CD14-positive monocyte (primary cell): ENCODE measurements at regions of chr1 and their contacts with region 1.

Region 1: GRCh38 chr1:204363335-204364124 is 3.8 kb upstream of the PLEKHA6 start:
- DNase-seq: peak; percentile 56 to 74 (median 69)
- H3K4me3 ChIP-seq: peak overlapping the region; percentile 20 to 78 (median 52)
- H3K4me3 Mint-ChIP-seq: peak overlapping the region; percentile 80 to 92
- H3K27ac ChIP-seq: no peak overlapping the region
- H3K27ac Mint-ChIP-seq: peak overlapping the region in 3 of 7 donors; percentile 6 to 52 (median 48)
- H3K4me1 ChIP-seq: peaks cover 7 to 12% of the 10 kb centered on the region in 2 donors
- H3K4me1 Mint-ChIP-seq: peaks cover 10% of the 10 kb centered on the region
- H3K27me3 ChIP-seq: peaks cover 5 to 22% of the 10 kb centered on the region in 2 donors
- H3K27me3 Mint-ChIP-seq: peaks cover 26 to 39% (median 34%) of the 10 kb centered on the region in 3 donors
- CTCF ChIP-seq: peak; percentile 95

Region 2: GRCh38 chr1:204162231-204163074 is 201.1 kb before region 1 on chr1:
- intact Hi-C with region 1: loop called (anchors 1 to 5 kb)
- DNase-seq: peak; percentile 49 to 66 (median 63)
- H3K4me3 ChIP-seq: no peak overlapping the region
- H3K4me3 Mint-ChIP-seq: no peak overlapping the region
- H3K27ac ChIP-seq: no peak overlapping the region
- H3K27ac Mint-ChIP-seq: no peak overlapping the region
- H3K4me1 ChIP-seq: no peaks in the 10 kb centered on the region
- H3K4me1 Mint-ChIP-seq: peaks cover 3% of the 10 kb centered on the region
- H3K27me3 ChIP-seq: no peaks in the 10 kb centered on the region
- H3K27me3 Mint-ChIP-seq: peaks cover 3 to 13% (median 7%) of the 10 kb centered on the region in 3 donors
- CTCF ChIP-seq: peak; percentile 99

Region 3: GRCh38 chr1:204213668-204214662 is 149.6 kb before region 1 on chr1 and contains the start of gene GOLT1A:
- intact Hi-C with region 1: loop called (anchors 1 to 5 kb)
- DNase-seq: peak; percentile 27 to 46 (median 42)
- H3K4me3 ChIP-seq: peak within 1 kb of the TSS in 1 of 3 experiments; percentile 60
- H3K4me3 Mint-ChIP-seq: peak within 1 kb of the TSS; percentile 42 to 86
- H3K27ac ChIP-seq: no peak within 1 kb of the TSS
- H3K27ac Mint-ChIP-seq: peak within 1 kb of the TSS in 1 of 7 donors; percentile 5
- H3K4me1 ChIP-seq: peaks cover 7 to 8% of the 10 kb centered on the region in 2 donors
- H3K4me1 Mint-ChIP-seq: peaks cover 8% of the 10 kb centered on the region
- H3K27me3 ChIP-seq: peaks cover 0 to 5% of the 10 kb centered on the region in 2 donors
- H3K27me3 Mint-ChIP-seq: peaks cover 6 to 8% (median 7%) of the 10 kb centered on the region in 3 donors
- CTCF ChIP-seq: peak; percentile 60
- polyA plus RNA-seq, gene GOLT1A: not detected

Region 4: DNA sequence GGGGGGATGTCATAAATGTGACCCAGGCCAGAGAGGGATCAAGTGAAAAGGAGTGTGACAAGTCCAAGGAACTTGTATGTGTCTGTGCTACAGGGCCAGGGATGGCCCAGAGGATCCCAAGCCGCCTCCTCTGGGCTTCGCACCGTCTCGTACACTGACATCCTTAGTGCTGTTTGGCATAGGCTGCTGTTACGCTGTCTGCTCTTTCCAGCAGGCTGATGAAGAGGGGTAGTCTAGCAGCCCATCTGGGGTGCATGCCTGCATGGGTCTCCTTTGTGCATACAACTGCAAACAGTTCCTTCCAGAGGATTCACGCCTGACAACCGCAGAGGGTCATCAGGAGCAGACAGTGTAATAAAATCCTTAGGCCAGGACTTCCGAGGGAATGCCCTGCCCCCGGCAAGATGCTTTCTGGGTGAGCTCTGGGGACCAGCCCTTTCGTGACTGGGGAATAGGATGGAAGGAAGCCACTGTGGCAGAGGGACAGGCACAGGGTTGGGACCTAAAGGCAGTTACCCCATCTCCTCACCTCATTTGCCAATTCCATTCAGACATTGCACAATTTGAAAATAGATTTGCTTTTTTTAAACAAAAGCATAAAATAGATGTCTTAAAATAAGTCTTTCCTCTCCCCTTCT is 143.4 kb before region 1 on chr1:
- intact Hi-C with region 1: loop called in 1 of 2 experiments (anchors 5 kb)
- DNase-seq: no peak
- H3K4me3 ChIP-seq: no peak overlapping the region
- H3K4me3 Mint-ChIP-seq: no peak overlapping the region
- H3K27ac ChIP-seq: no peak overlapping the region
- H3K27ac Mint-ChIP-seq: no peak overlapping the region
- H3K4me1 ChIP-seq: no peaks in the 10 kb centered on the region
- H3K4me1 Mint-ChIP-seq: peaks cover 6% of the 10 kb centered on the region
- H3K27me3 ChIP-seq: no peaks in the 10 kb centered on the region
- H3K27me3 Mint-ChIP-seq: peaks cover 0 to 1% (median 0%) of the 10 kb centered on the region in 3 donors
- CTCF ChIP-seq: no peak

Region 5: DNA sequence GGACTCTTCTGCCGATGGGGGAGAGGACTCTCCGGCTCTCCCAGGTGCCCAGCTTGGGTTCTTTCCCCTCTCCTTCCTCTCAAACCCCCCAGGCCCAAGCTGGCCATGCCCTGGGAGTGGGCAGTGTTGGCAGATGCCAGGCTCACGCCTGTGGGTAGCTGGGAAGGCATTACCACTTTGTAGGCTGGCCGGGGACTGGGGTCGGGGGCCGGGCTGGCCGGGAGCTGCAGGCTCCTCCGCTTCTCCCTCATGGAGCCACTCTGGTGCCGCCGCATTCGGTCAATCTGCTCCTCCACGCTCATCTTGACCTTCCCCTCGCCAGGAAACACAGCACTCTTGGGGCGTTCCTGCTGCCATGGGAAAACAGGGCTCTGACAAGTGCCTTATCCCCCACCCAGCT is 133.3 kb before region 1 on chr1:
- intact Hi-C with region 1: no loop called
- DNase-seq: no peak
- H3K4me3 ChIP-seq: no peak overlapping the region
- H3K4me3 Mint-ChIP-seq: no peak overlapping the region
- H3K27ac ChIP-seq: no peak overlapping the region
- H3K27ac Mint-ChIP-seq: no peak overlapping the region
- H3K4me1 ChIP-seq: no peaks in the 10 kb centered on the region
- H3K4me1 Mint-ChIP-seq: no peaks in the 10 kb centered on the region
- H3K27me3 ChIP-seq: no peaks in the 10 kb centered on the region
- H3K27me3 Mint-ChIP-seq: peaks cover 0 to 6% (median 5%) of the 10 kb centered on the region in 3 donors
- CTCF ChIP-seq: no peak

Region 6: GRCh38 chr1:204257954-204258752 is 105.4 kb before region 1 on chr1:
- intact Hi-C with region 1: loop called (anchors 1 to 10 kb)
- DNase-seq: peak; percentile 5 to 27 (median 26)
- H3K4me3 ChIP-seq: no peak overlapping the region
- H3K4me3 Mint-ChIP-seq: no peak overlapping the region
- H3K27ac ChIP-seq: no peak overlapping the region
- H3K27ac Mint-ChIP-seq: peak overlapping the region in 1 of 7 donors; percentile 10
- H3K4me1 ChIP-seq: peaks cover 12% of the 10 kb centered on the region in 2 donors
- H3K4me1 Mint-ChIP-seq: peaks cover 17% of the 10 kb centered on the region
- H3K27me3 ChIP-seq: no peaks in the 10 kb centered on the region
- H3K27me3 Mint-ChIP-seq: peaks cover 0 to 5% (median 2%) of the 10 kb centered on the region in 3 donors
- CTCF ChIP-seq: peak; percentile 75

Region 7: DNA sequence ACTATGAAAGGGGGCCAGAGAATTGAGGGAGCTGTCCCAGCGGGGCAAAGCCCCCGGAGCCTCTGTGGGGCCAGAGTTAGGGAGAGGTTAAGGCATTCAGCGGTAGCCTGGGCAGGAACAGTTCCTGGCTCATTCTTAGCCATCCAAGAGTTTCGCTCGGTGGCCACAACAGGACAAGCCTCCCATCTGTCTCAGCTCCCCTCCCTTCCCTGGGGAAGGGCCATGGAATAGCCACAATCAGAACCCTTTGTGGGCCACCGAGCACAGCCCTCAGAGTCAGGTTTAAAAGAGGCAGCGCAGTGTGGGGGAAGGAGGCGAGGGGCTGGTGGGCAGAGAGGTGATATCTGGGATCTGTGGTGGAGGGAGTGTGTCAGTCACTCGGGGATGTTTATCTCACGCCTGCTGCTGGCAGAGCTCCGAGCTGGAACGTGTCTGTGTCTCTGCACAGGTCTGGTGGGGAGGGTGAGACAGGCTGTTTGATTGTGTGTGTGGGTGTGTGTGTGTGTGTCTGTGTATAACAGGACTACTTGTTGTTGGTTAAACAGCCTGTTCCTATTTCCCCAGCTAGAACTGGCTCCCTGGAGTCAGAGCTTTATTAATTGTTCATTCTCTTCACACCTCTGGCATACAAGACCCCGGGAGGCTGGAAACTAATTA is 100.1 kb before region 1 on chr1:
- intact Hi-C with region 1: loop called (anchors 1 to 10 kb)
- DNase-seq: no peak
- H3K4me3 ChIP-seq: no peak overlapping the region
- H3K4me3 Mint-ChIP-seq: peak overlapping the region in 1 of 2 donors; percentile 44
- H3K27ac ChIP-seq: no peak overlapping the region
- H3K27ac Mint-ChIP-seq: peak overlapping the region in 1 of 7 donors; percentile 14
- H3K4me1 ChIP-seq: no peaks in the 10 kb centered on the region
- H3K4me1 Mint-ChIP-seq: no peaks in the 10 kb centered on the region
- H3K27me3 ChIP-seq: no peaks in the 10 kb centered on the region
- H3K27me3 Mint-ChIP-seq: peaks cover 0 to 2% (median 1%) of the 10 kb centered on the region in 3 donors
- CTCF ChIP-seq: no peak

Region 8: GRCh38 chr1:204398217-204399081 is 34.9 kb after region 1 on chr1:
- intact Hi-C with region 1: no loop called
- DNase-seq: peak; percentile 51 to 66 (median 60)
- H3K4me3 ChIP-seq: no peak overlapping the region
- H3K4me3 Mint-ChIP-seq: no peak overlapping the region
- H3K27ac ChIP-seq: no peak overlapping the region
- H3K27ac Mint-ChIP-seq: peak overlapping the region in 3 of 7 donors; percentile 20 to 57 (median 21)
- H3K4me1 ChIP-seq: no peaks in the 10 kb centered on the region
- H3K4me1 Mint-ChIP-seq: no peaks in the 10 kb centered on the region
- H3K27me3 ChIP-seq: no peaks in the 10 kb centered on the region
- H3K27me3 Mint-ChIP-seq: peaks cover 1 to 5% (median 2%) of the 10 kb centered on the region in 3 donors
- CTCF ChIP-seq: peak; percentile 85

Region 9: GRCh38 chr1:204446370-204447111 is 83.0 kb after region 1 on chr1:
- intact Hi-C with region 1: no loop called
- DNase-seq: peak; percentile 52 to 67 (median 65)
- H3K4me3 ChIP-seq: no peak overlapping the region
- H3K4me3 Mint-ChIP-seq: no peak overlapping the region
- H3K27ac ChIP-seq: no peak overlapping the region
- H3K27ac Mint-ChIP-seq: peak overlapping the region in 1 of 7 donors; percentile 56
- H3K4me1 ChIP-seq: peaks cover 5 to 7% of the 10 kb centered on the region in 2 donors
- H3K4me1 Mint-ChIP-seq: peaks cover 13% of the 10 kb centered on the region
- H3K27me3 ChIP-seq: no peaks in the 10 kb centered on the region
- H3K27me3 Mint-ChIP-seq: peaks cover 0 to 5% (median 2%) of the 10 kb centered on the region in 3 donors
- CTCF ChIP-seq: peak; percentile 78

Region 10: GRCh38 chr1:204600968-204601367 is 237.4 kb after region 1 on chr1:
- intact Hi-C with region 1: no loop called
- DNase-seq: no peak
- H3K4me3 ChIP-seq: no peak overlapping the region
- H3K4me3 Mint-ChIP-seq: no peak overlapping the region
- H3K27ac ChIP-seq: no peak overlapping the region
- H3K27ac Mint-ChIP-seq: no peak overlapping the region
- H3K4me1 ChIP-seq: no peaks in the 10 kb centered on the region
- H3K4me1 Mint-ChIP-seq: peaks cover 5% of the 10 kb centered on the region
- H3K27me3 ChIP-seq: no peaks in the 10 kb centered on the region
- H3K27me3 Mint-ChIP-seq: peaks cover 2 to 6% (median 5%) of the 10 kb centered on the region in 3 donors
- CTCF ChIP-seq: no peak